ENCODE measurements at regions of chr1 and their contacts with region 1.

Region 1: DNA sequence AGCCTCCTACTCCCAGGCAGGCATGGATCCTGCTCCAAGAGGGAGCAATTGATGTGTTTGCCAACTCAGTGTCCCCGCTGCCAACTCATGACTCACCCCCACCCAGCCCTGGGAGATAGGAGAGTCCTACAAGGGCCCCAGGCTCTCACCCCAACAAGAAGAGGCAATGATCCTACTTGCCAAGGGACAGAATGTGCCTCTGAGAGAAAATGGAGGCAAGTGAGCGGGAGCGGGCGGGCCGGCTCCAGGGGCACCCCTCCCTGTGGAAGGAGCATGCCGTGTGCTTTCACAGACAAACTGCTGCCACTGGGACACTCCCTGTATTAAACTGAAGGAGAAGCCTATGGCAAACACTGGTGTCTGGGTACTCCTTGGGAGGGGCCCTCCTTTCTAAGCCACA is 16.7 kb downstream of the PKP1 start:
- DNase-seq: peak; percentile 98
- H3K4me3 ChIP-seq: no peak overlapping the region
- H3K27ac ChIP-seq: peak overlapping the region; percentile 87
- H3K4me1 ChIP-seq: peaks cover 81% of the 10 kb centered on the region
- H3K27me3 ChIP-seq: no peaks in the 10 kb centered on the region
- CTCF ChIP-seq: no peak

Region 2: DNA sequence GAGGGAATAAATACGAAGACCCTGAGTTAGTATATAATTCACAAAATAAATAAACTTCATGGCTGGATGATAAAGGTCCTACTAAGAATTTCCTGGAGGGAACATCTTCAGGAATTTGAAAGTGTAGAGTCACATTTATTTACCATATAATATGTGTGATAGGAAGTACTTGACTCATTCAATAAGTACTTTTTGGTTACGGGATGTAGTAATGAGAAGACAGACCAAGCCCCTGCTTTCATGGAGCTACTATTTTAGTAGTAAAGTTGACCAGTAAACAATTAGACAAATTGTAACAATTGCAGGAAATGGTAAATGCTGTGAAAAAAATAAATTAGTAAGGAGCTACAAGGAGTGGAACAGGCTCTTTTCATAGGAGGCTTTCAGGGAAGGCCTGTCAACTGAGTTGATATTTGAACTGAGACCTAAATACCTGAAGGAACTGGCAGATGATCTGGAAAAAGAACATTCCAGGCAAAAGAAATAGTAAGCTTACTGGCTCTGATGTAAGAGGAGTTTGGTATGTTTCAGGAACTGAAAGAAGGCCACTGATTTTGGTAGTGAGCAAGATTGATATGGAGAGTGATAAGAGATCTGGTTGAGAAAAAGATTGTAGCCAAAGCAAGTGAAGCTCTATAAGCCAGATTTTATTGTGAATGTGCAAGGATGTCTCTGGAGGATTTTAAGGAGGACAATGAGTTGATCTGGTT is 525.1 kb before region 1 on chr1:
- CTCF ChIA-PET with region 1: no interaction called
- dilution Hi-C with region 1: no loop called
- in situ Hi-C with region 1: no loop called
- intact Hi-C with region 1: no loop called
- DNase-seq: no peak
- H3K4me3 ChIP-seq: no peak overlapping the region
- H3K27ac ChIP-seq: no peak overlapping the region
- H3K4me1 ChIP-seq: peaks cover 16% of the 10 kb centered on the region
- H3K27me3 ChIP-seq: no peaks in the 10 kb centered on the region
- CTCF ChIP-seq: no peak

Region 3: GRCh38 chr1:201254625-201255506 is 45.1 kb before region 1 on chr1:
- CTCF ChIA-PET with region 1: no interaction called
- dilution Hi-C with region 1: no loop called
- in situ Hi-C with region 1: no loop called
- intact Hi-C with region 1: no loop called
- DNase-seq: peak; percentile 34
- H3K4me3 ChIP-seq: no peak overlapping the region
- H3K27ac ChIP-seq: no peak overlapping the region
- H3K4me1 ChIP-seq: peaks cover 11% of the 10 kb centered on the region
- H3K27me3 ChIP-seq: no peaks in the 10 kb centered on the region
- CTCF ChIP-seq: peak; percentile 89 to 99

Region 4: GRCh38 chr1:201268604-201269151 is 31.3 kb before region 1 on chr1:
- CTCF ChIA-PET with region 1: interaction called, 5 read pairs
- dilution Hi-C with region 1: loop called (anchors 5 kb)
- in situ Hi-C with region 1: no loop called
- intact Hi-C with region 1: no loop called
- DNase-seq: peak; percentile 80
- H3K4me3 ChIP-seq: no peak overlapping the region
- H3K27ac ChIP-seq: peak overlapping the region; percentile 94
- H3K4me1 ChIP-seq: peaks cover 42% of the 10 kb centered on the region
- H3K27me3 ChIP-seq: no peaks in the 10 kb centered on the region
- CTCF ChIP-seq: no peak

Region 5: GRCh38 chr1:201551877-201552731 is 252.1 kb after region 1 on chr1:
- CTCF ChIA-PET with region 1: no interaction called
- dilution Hi-C with region 1: no loop called
- in situ Hi-C with region 1: no loop called
- intact Hi-C with region 1: no loop called
- DNase-seq: peak; percentile 45
- H3K4me3 ChIP-seq: no peak overlapping the region
- H3K27ac ChIP-seq: no peak overlapping the region
- H3K4me1 ChIP-seq: peaks cover 6% of the 10 kb centered on the region
- H3K27me3 ChIP-seq: no peaks in the 10 kb centered on the region
- CTCF ChIP-seq: no peak

Measured in mammary epithelial cell (primary cell).